Activated B cell treated with CpG ODN at 0.5 μM for 24 hours (primary cell): ENCODE measurements at regions of chr3 and their contacts with region 1.

Region 1: DNA sequence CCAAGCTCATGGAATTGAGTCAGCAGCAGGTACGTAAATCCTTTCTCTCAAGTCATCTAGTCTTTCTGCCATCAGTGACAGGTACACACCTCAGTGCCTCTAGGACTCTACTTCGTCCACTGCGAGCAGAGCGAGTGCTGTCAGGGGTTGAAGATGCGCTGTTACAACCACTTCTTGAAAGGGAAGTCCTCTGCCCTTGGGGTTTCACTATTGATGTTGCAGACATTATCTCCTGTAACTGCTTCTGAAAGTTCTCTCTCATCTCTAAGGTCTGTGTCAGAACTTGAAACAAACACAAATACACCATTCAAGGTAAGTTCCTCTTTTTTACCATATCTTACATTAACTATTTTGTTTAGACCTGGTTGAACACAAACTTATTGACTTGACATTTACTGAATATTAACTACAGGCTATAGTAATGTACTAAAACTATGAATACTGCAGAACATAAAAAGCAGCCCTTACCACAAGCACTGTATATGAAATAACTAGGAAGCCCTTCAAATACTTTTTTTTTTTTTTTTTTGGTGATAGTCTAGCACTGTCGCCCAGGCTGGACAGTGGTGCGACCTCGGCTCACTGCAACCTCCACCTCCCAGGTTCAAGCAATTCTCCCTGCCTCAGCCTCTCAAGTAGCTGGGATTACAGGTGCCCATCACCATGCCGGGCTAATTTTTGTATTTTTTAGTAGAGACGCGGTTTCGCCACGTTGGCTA is 41.5 kb downstream of the TOPBP1 start:
- DNase-seq: no peak
- ATAC-seq: peak; percentile 98
- H3K4me3 Mint-ChIP-seq: no peak overlapping the region
- H3K27ac Mint-ChIP-seq: peak overlapping the region; percentile 86
- H3K4me1 Mint-ChIP-seq: peaks cover 15% of the 10 kb centered on the region
- H3K27me3 Mint-ChIP-seq: no peaks in the 10 kb centered on the region
- CTCF ChIP-seq: no peak

Region 2: GRCh38 chr3:133295199-133295901 is 324.9 kb before region 1 on chr3:
- CTCF ChIA-PET with region 1: no interaction called
- POLR2A ChIA-PET with region 1: no interaction called
- intact Hi-C with region 1: loop called (anchors 10 kb)
- DNase-seq: no peak
- ATAC-seq: no peak
- H3K4me3 Mint-ChIP-seq: no peak overlapping the region
- H3K27ac Mint-ChIP-seq: no peak overlapping the region
- H3K4me1 Mint-ChIP-seq: no peaks in the 10 kb centered on the region
- H3K27me3 Mint-ChIP-seq: peaks cover 2% of the 10 kb centered on the region
- CTCF ChIP-seq: no peak

Region 3: GRCh38 chr3:133487920-133488540 is 132.2 kb before region 1 on chr3:
- CTCF ChIA-PET with region 1: no interaction called
- POLR2A ChIA-PET with region 1: no interaction called
- intact Hi-C with region 1: loop called (anchors 2 kb)
- DNase-seq: no peak
- ATAC-seq: peak; percentile 20
- H3K4me3 Mint-ChIP-seq: no peak overlapping the region
- H3K27ac Mint-ChIP-seq: no peak overlapping the region
- H3K4me1 Mint-ChIP-seq: peaks cover 57% of the 10 kb centered on the region
- H3K27me3 Mint-ChIP-seq: no peaks in the 10 kb centered on the region
- CTCF ChIP-seq: no peak

Region 4: DNA sequence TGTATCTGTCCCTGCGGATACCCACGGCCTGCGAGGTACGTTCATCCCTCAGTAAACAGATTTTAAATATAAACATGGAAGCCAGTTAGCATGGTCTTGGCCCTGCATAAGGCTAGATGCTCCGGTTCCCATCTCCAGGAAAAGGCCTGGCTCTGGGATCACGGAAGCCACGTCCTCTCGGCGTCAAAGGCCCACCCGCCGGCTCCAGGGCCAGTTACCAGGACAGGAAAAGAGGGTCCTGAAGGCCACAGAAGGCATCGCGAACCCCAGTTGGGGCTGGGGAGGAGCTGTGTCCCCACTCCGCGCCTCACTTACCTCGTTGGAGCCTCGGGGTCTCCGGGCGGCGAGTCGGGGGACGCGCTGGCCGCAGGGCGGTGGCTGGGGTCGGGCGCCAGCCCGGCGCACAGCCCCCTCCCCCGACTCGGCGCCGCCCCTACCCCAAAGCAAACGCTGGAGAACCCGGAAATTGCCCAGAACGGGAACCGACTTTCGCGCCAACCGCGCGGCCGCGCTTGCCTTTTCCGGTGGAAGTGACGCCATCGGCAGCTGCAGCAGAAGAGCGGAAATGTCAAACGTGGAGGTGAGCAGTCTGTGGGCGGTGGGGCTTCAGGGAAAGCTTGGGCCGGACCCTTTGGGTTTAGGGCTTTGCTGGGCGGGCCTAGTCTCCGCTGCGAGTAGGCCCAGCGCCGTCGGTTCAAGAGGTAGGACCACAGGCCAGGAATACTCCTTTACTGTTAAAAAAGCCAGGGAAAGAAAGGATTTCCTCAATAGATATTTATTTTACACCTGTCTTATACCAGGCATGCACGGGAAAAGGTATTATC is 41.4 kb after region 1 on chr3 and contains the start of gene TOPBP1:
- CTCF ChIA-PET with region 1: no interaction called
- POLR2A ChIA-PET with region 1: no interaction called
- intact Hi-C with region 1: loop called (anchors 1 kb)
- DNase-seq: peak; percentile 76
- ATAC-seq: peak; percentile 86
- H3K4me3 Mint-ChIP-seq: peak within 1 kb of the TSS; percentile 98
- H3K27ac Mint-ChIP-seq: peak within 1 kb of the TSS; percentile 95
- H3K4me1 Mint-ChIP-seq: peaks cover 34% of the 10 kb centered on the region
- H3K27me3 Mint-ChIP-seq: no peaks in the 10 kb centered on the region
- CTCF ChIP-seq: no peak
- total RNA-seq, gene TOPBP1: 45.8 and 49.9 TPM in 2 replicates